IMR-90 (cell line): ENCODE measurements at regions of chr22 and their contacts with region 1.

Region 1: GRCh38 chr22:19178656-19179496 is at the start of gene SLC25A1:
- DNase-seq: peak; percentile 80
- ATAC-seq: peak; percentile 90
- H3K4me3 ChIP-seq: peak within 1 kb of the TSS; percentile 94
- H3K27ac ChIP-seq: peak within 1 kb of the TSS; percentile 70
- H3K4me1 ChIP-seq: peaks cover 21% of the 10 kb centered on the region
- H3K27me3 ChIP-seq: no peaks in the 10 kb centered on the region
- CTCF ChIP-seq: no peak
- POLR2A ChIP-seq: peak; percentile 56
- RAD21 ChIP-seq: no peak
- total RNA-seq, gene SLC25A1: 41.0 and 46.1 TPM in 2 replicates

Region 2: DNA sequence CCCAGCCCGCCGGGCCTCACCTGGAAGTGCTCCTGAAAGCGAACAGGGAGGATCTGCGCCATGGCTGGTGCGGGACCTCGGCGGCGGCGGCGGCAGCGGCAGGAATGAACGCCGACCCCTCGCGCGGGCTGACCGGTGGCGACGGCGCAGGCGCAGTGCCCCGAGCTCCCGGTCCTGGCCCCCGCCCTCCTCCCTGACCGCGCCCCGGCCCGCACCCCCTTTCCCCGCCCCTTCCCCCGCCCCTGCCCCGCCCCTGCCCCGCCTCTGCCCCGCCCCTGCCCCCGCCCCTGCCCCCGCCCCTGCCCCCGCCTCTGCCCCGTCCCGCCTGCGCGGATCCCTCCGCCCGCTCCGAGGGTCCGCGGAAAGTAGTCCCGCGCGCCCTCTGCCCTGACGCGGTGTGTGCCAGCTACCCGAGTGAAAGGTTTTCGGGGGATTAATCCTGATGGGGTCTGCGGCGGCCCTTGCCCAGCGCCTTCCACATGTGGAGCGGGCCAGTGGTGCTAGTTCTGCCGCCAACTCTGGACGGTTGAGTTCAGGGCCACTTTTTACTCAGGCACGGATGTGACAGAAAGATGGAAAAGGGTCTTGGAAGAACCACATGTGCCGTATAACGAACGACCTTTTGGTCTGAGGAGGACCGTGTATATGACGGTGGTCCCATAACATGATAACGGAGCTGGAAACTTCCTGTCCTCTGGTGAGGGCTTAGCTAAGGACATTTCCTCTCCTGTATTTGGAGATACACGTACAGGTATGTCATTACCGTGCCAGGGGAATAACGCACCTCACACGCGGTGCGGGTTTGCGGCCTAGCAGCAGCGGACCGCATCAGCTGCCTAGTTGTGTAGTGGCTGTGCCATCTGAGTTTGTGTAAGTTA is 112.9 kb after region 1 on chr22 and contains the start of gene CLTCL1:
- CTCF ChIA-PET with region 1: interaction called, 3 read pairs
- POLR2A ChIA-PET with region 1: no interaction called
- dilution Hi-C with region 1: no loop called
- in situ Hi-C with region 1: no loop called
- intact Hi-C with region 1: loop called (anchors 1 kb)
- DNase-seq: peak; percentile 58
- ATAC-seq: peak; percentile 91
- H3K4me3 ChIP-seq: peak within 1 kb of the TSS; percentile 80
- H3K27ac ChIP-seq: peak within 1 kb of the TSS; percentile 39
- H3K4me1 ChIP-seq: peaks cover 17% of the 10 kb centered on the region
- H3K27me3 ChIP-seq: peaks cover 3% of the 10 kb centered on the region; the same call in 1 of the 2 replicates
- CTCF ChIP-seq: no peak
- POLR2A ChIP-seq: no peak
- RAD21 ChIP-seq: no peak
- total RNA-seq, gene CLTCL1: 7.5 and 8.1 TPM in 2 replicates

Region 3: GRCh38 chr22:19361501-19362103 is 182.7 kb after region 1 on chr22:
- CTCF ChIA-PET with region 1: no interaction called
- POLR2A ChIA-PET with region 1: interaction called, 5 read pairs
- dilution Hi-C with region 1: no loop called
- in situ Hi-C with region 1: loop called (anchors 10 kb)
- intact Hi-C with region 1: loop called (anchors 2 kb)
- DNase-seq: no peak
- ATAC-seq: no peak
- H3K4me3 ChIP-seq: no peak overlapping the region
- H3K27ac ChIP-seq: no peak overlapping the region
- H3K4me1 ChIP-seq: peaks cover 10% of the 10 kb centered on the region
- H3K27me3 ChIP-seq: no peaks in the 10 kb centered on the region
- CTCF ChIP-seq: no peak
- POLR2A ChIP-seq: no peak
- RAD21 ChIP-seq: no peak

Region 4: GRCh38 chr22:19479357-19480172 is 300.7 kb after region 1 on chr22 and contains the start of gene CDC45:
- CTCF ChIA-PET with region 1: no interaction called
- POLR2A ChIA-PET with region 1: no interaction called
- dilution Hi-C with region 1: no loop called
- in situ Hi-C with region 1: no loop called
- intact Hi-C with region 1: loop called (anchors 2 kb)
- DNase-seq: peak; percentile 98
- ATAC-seq: peak; percentile 93
- H3K4me3 ChIP-seq: peak within 1 kb of the TSS; percentile 87
- H3K27ac ChIP-seq: peak within 1 kb of the TSS; percentile 95
- H3K4me1 ChIP-seq: peaks cover 3% of the 10 kb centered on the region
- H3K27me3 ChIP-seq: no peaks in the 10 kb centered on the region
- CTCF ChIP-seq: no peak
- POLR2A ChIP-seq: peak; percentile 39; the same call in 1 of the 2 replicates
- RAD21 ChIP-seq: no peak
- total RNA-seq, gene CDC45: 37.5 and 44.6 TPM in 2 replicates